GM10248 (cell line): ENCODE measurements at regions of chr2 and their contacts with region 1.

Region 1: DNA sequence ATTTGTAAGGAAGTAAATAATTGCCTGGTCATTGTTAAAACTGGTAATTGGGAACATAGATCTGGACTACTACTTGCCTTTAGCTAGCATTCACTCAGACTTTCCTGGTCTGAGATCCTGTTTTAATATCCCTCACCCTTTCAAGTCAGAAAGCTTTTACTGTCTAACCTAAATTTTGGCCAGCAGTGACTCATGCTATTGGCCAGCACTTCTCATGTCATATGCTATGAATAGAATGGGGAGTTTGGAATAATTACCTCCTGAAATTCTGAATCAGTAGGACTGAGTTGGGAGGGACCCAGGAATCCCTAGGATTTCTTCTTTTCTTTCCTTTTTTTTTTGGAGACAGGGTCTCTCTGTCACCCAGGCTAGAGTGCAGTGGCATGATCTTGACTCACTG is 19.3 kb downstream of the STK36 start:
- DNase-seq: no peak
- CTCF ChIP-seq: no peak

Region 2: GRCh38 chr2:218395797-218396687 is 295.2 kb before region 1 on chr2:
- CTCF ChIA-PET with region 1: no interaction called
- POLR2A ChIA-PET with region 1: no interaction called
- DNase-seq: peak; percentile 93
- CTCF ChIP-seq: peak; percentile 77

Region 3: DNA sequence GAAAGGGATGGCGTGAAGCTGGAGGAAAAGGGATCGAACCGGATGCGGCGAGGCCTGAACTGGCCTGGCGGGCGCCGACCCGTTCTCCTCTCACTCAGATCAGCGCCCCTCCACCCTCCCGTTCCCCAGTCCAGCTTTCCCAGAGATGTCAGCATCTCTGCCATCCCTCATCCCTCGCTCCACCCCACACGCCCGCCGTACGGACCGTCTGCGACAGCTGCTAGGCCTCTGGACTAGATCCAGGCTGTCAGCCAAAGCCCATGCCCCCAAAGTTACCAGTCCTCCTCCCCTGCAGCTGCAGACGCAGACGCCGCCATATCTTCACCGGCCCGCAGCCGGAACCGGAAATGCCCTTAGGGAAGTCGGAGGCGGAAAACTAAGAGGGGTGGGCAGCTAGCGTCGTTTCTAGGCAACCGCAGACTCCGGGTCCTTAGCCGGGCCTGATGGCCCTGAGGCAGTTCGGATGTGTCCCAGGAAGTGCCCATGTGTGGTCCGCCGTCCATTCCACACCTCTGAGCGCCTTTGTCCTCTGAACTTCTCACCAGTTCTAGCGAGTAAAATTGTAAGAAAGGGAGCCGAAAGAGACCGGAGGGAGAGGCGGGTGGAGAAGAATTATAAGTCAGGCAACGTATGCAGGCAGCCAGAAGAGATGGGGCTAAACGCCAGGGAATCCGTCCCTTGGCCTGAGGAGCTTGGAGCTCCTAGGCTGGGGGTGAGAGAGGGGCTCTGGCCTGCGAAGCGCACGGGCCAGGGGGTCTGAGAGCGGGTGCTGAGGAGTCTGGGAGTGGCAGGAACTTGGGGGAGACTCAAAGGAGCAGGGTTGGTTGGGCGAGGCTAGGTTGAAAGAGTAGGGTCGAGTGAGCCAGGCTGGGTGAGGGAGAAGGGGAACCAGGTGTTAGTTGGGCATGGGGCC is 19.3 kb before region 1 on chr2 and contains the starts of genes RNF25 and STK36:
- CTCF ChIA-PET with region 1: interaction called, 29 read pairs
- POLR2A ChIA-PET with region 1: no interaction called
- DNase-seq: peak; percentile 91
- CTCF ChIP-seq: no peak